HEK293 (cell line): ENCODE measurements at regions of chr11 and their contacts with region 1.

Region 1: DNA sequence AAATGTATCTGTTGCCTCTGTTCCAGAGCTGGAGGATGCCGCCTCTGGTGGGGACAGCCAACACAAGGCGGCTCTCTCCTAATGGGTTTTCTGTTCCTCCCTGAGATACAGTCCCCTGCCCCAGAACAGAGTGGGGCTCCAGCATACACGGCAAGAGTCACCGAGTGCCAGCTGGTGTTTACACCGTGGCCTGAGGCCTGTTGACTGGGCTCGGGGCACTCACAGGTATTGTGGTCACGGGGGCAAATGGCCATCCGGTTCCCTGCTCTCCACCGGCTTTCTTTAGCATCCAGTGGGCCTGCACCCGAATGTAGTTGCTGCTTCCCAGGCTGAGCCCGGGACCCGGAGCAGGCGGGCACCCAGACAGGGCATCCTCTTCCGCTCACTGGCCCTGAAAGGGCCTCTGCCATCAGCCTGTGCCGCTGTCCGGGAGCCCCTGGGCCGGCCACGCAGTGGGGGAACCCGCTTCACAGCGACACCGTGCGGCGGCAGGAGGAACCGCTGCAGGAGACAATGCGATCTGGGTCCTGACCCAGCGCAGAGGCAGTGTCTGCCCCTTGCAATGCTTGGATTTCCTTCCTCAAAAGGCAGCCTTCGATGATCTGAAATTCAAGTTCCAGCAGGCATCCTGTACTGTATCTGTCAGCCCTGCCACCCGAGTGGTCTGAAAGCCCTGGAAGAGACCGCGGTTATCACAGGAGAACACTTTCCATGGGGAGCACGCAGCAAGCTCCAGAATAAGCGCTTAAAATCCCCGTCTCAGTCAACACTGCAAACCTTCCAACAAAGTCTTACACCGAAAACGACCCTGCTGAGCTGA is 859 bp upstream of the KRTAP5-5 start:
- H3K4me3 ChIP-seq: no peak overlapping the region
- H3K27ac ChIP-seq: no peak overlapping the region
- H3K4me1 ChIP-seq: no peaks in the 10 kb centered on the region
- CTCF ChIP-seq: peak; percentile 76

Region 2: GRCh38 chr11:1618231-1618630 is 10.5 kb before region 1 on chr11:
- CTCF ChIA-PET with region 1: interaction called, 13 read pairs
- POLR2A ChIA-PET with region 1: no interaction called
- H3K4me3 ChIP-seq: no peak overlapping the region
- H3K27ac ChIP-seq: no peak overlapping the region
- H3K4me1 ChIP-seq: no peaks in the 10 kb centered on the region
- CTCF ChIP-seq: no peak

Region 3: GRCh38 chr11:1640076-1640946 is 11.6 kb after region 1 on chr11:
- CTCF ChIA-PET with region 1: interaction called, 67 read pairs
- POLR2A ChIA-PET with region 1: no interaction called
- H3K4me3 ChIP-seq: no peak overlapping the region
- H3K27ac ChIP-seq: no peak overlapping the region
- H3K4me1 ChIP-seq: no peaks in the 10 kb centered on the region
- CTCF ChIP-seq: peak; percentile 44